Activated CD8-positive, alpha-beta T cell treated with anti-CD3 and anti-CD28 coated beads for 36 hours (primary cell): ENCODE measurements at regions of chr2 and their contacts with region 1.

Region 1: DNA sequence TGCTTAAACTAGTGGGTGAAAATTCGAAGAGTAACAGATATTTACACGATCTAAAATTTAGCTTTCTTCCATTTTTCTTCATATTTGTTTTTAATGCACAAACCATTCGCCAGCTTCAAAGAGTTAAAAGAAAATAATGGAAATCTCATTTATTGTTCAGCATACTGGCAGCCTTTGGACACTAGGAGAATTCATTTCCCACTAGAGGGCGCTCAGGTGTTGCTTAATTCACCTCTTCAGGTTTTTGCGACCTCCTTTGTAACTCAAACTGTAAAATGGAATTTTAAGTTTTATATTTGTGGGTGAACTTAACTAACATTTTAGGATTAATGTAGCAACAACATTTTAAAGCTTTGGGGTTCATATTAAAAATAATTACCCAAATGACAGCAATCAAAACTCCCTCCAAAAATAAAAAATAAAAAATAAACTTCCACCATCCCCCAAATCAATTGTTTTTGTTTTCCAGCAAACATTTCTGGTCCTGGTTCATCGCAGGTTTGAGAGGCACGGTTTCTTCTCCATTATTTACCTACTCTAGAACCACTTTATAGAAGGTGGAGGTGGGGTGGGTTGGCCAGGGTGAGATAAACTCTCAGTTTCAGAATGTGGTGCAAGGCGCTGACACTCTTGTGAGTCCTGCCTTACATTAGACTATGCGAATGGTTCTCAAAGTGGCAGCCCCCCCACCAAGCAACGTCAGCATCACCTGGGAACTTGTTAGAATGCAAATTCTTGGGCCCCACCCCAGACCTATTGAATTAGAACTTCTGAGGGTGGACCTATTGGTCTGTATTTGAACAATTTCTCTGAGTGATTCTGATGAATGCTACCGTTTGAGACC is 24.7 kb upstream of the PNPT1 start:
- DNase-seq: peak; percentile 72
- ATAC-seq: peak; percentile 51
- H3K4me3 Mint-ChIP-seq: no peak overlapping the region
- H3K27ac Mint-ChIP-seq: no peak overlapping the region
- H3K4me1 Mint-ChIP-seq: no peaks in the 10 kb centered on the region
- H3K27me3 Mint-ChIP-seq: peaks cover 7% of the 10 kb centered on the region
- CTCF ChIP-seq: peak; percentile 87

Region 2: GRCh38 chr2:55309446-55309845 is 408.9 kb before region 1 on chr2:
- CTCF ChIA-PET with region 1: no interaction called
- POLR2A ChIA-PET with region 1: no interaction called
- intact Hi-C with region 1: no loop called
- DNase-seq: no peak
- ATAC-seq: no peak
- H3K4me3 Mint-ChIP-seq: no peak overlapping the region
- H3K27ac Mint-ChIP-seq: no peak overlapping the region
- H3K4me1 Mint-ChIP-seq: peaks cover 23% of the 10 kb centered on the region
- H3K27me3 Mint-ChIP-seq: no peaks in the 10 kb centered on the region
- CTCF ChIP-seq: no peak

Region 3: DNA sequence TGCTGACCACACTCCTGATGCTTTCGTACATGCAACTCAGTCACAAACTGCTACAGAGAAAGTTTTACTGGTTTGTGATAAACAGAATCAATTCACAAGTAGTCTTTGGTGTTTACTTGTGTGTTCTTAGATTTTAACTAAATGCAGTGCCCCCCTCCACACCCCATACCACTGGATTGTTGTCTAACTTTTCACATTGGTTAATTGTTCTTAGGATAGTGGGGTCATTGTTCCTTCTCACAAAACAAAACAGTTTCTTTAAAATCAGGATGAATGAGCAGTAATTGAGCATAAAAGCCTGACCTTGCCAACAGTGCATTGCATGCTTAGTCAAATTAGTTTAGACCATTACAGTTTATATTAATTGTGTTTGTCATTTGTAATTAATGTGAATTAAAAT is 10.6 kb before region 1 on chr2:
- CTCF ChIA-PET with region 1: interaction called, 11 read pairs
- POLR2A ChIA-PET with region 1: no interaction called
- intact Hi-C with region 1: no loop called
- DNase-seq: no peak
- ATAC-seq: no peak
- H3K4me3 Mint-ChIP-seq: no peak overlapping the region
- H3K27ac Mint-ChIP-seq: no peak overlapping the region
- H3K4me1 Mint-ChIP-seq: no peaks in the 10 kb centered on the region
- H3K27me3 Mint-ChIP-seq: peaks cover 10% of the 10 kb centered on the region
- CTCF ChIP-seq: no peak

Region 4: GRCh38 chr2:55732854-55733253 is 14.5 kb after region 1 on chr2:
- CTCF ChIA-PET with region 1: interaction called, 17 read pairs
- POLR2A ChIA-PET with region 1: no interaction called
- intact Hi-C with region 1: no loop called
- DNase-seq: no peak
- ATAC-seq: no peak
- H3K4me3 Mint-ChIP-seq: no peak overlapping the region
- H3K27ac Mint-ChIP-seq: no peak overlapping the region
- H3K4me1 Mint-ChIP-seq: no peaks in the 10 kb centered on the region
- H3K27me3 Mint-ChIP-seq: no peaks in the 10 kb centered on the region
- CTCF ChIP-seq: no peak

Region 5: DNA sequence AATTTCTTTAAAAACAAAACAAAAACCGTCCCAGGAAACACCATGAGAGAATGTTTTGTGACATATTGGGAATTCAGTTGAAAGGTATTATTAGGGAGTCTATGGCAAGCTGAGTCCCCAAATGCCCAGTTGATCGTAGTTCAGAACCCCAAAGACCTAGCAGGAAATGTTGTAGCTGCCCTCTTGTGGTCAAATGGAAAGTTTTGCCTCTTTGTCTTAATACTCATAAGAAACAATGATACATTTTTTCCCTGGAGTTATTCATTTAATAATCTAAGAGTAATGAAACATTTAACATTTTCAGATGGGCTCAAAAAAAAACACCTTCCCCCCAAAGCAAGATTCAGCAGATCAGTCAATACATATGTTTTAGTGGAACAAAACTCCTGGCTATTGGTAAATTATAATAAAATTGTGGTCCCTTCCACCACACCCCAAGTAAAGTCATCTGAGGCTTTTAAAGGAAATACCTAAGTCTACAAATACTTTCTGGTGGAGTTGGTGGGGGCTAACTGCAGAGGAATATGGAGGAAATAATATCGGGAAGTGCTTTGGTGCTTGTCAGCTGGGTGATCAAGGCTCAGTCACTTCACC is 243.0 kb after region 1 on chr2:
- CTCF ChIA-PET with region 1: interaction called, 13 read pairs
- POLR2A ChIA-PET with region 1: no interaction called
- intact Hi-C with region 1: loop called (anchors 5 kb)
- DNase-seq: no peak
- ATAC-seq: no peak
- H3K4me3 Mint-ChIP-seq: no peak overlapping the region
- H3K27ac Mint-ChIP-seq: no peak overlapping the region
- H3K4me1 Mint-ChIP-seq: no peaks in the 10 kb centered on the region
- H3K27me3 Mint-ChIP-seq: peaks cover 2% of the 10 kb centered on the region
- CTCF ChIP-seq: peak; percentile 47

Region 6: GRCh38 chr2:56132138-56132537 is 413.8 kb after region 1 on chr2:
- CTCF ChIA-PET with region 1: no interaction called
- POLR2A ChIA-PET with region 1: no interaction called
- intact Hi-C with region 1: loop called (anchors 5 kb)
- DNase-seq: no peak
- ATAC-seq: no peak
- H3K4me3 Mint-ChIP-seq: no peak overlapping the region
- H3K27ac Mint-ChIP-seq: no peak overlapping the region
- H3K4me1 Mint-ChIP-seq: no peaks in the 10 kb centered on the region
- H3K27me3 Mint-ChIP-seq: no peaks in the 10 kb centered on the region
- CTCF ChIP-seq: peak; percentile 51

Region 7: GRCh38 chr2:57516698-57517340 is 1798.4 kb after region 1 on chr2:
- CTCF ChIA-PET with region 1: no interaction called
- POLR2A ChIA-PET with region 1: no interaction called
- intact Hi-C with region 1: loop called (anchors 10 kb)
- DNase-seq: no peak
- ATAC-seq: peak; percentile 56
- H3K4me3 Mint-ChIP-seq: no peak overlapping the region
- H3K27ac Mint-ChIP-seq: no peak overlapping the region
- H3K4me1 Mint-ChIP-seq: no peaks in the 10 kb centered on the region
- H3K27me3 Mint-ChIP-seq: no peaks in the 10 kb centered on the region
- CTCF ChIP-seq: peak; percentile 70